ENCODE measurements at regions of chr11 and their contacts with region 1.

Region 1: GRCh38 chr11:17384002-17384511 is 4.4 kb downstream of the KCNJ11 start:
- DNase-seq: peak; percentile 95

Region 2: GRCh38 chr11:17504330-17505107 is 120.5 kb after region 1 on chr11:
- intact Hi-C with region 1: loop called (anchors 2 kb)
- DNase-seq: peak; percentile 93

Region 3: GRCh38 chr11:17915500-17916143 is 531.6 kb after region 1 on chr11:
- intact Hi-C with region 1: loop called in 1 of 2 experiments (anchors 5 kb)
- DNase-seq: no peak